Motor neuron (in vitro differentiated cells): ENCODE measurements at regions of chr6 and their contacts with region 1.

Region 1: DNA sequence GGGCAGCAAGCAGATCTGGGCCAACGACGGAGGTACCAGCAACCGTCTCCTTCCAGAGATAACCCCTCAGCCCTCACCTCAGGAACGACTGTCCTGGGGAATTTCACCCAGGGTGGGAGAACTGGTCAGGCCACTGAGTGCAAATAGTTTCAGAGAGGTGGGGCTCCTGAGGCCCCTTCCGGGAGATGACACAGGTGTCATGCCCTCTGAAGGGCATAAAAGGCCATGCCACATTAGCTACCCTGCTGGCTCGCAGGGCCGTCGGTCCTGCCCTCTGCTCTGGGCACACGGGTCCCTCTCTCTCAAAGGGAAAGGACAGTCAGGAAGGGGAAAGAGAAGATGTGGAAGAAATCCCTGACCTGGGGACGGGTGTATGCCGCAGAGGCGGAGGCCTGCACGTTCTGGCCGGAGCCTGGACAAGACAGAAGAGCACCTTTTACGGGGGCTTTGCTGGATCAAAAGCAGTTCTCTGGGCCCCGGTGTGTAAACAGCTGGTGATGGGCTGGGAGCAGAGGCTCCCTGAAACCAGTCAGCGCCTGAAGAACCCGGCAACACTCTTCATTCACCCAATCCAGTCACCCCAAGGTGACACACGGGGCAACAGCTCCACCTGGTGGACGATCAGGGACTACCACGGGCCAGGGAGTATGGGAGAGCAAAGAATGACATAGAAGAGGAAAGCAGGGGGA is 6.4 kb upstream of the TAF8 start:
- ATAC-seq: peak; percentile 55 to 98 (median 92)
- H3K4me3 ChIP-seq: peak overlapping the region in 1 of 5 donors; percentile 2
- H3K27ac ChIP-seq: peak overlapping the region in 1 of 2 donors; percentile 69
- H3K4me1 ChIP-seq: peaks cover 4 to 18% of the 10 kb centered on the region in 2 donors

Region 2: DNA sequence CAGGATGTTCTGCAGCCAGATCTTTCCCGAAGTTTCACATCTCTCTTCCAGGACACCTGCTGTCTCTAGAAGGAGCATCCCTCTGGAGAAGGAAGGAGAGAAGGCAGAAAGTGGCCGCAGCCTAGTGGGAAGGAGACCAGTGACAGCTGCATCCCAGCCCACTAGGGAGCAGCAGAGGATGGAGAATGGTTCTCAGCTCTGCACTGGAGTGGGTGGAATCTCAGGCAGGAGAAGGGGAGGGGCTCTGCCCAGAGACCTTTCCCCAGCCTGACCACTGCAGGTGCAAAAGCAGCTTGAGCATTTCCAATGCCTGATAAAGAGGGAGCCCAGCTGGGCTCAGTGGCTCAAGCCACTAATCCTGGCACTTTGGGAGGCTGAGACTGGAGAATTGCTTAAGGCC is 676.2 kb before region 1 on chr6:
- in situ Hi-C with region 1: loop called in 2 of 9 experiments (anchors 25 kb)
- ATAC-seq: peak; percentile 11 to 66 (median 23)
- H3K4me3 ChIP-seq: no peak overlapping the region
- H3K27ac ChIP-seq: no peak overlapping the region
- H3K4me1 ChIP-seq: peaks cover 16 to 19% of the 10 kb centered on the region in 2 donors

Region 3: GRCh38 chr6:41779793-41780545 is 264.0 kb before region 1 on chr6 and contains the start of gene FRS3:
- in situ Hi-C with region 1: loop called in 7 of 9 experiments (anchors 10 to 25 kb)
- ATAC-seq: peak; percentile 83 to 98 (median 96)
- H3K4me3 ChIP-seq: peak within 1 kb of the TSS; percentile 44 to 68 (median 65)
- H3K27ac ChIP-seq: peak within 1 kb of the TSS; percentile 5 to 32
- H3K4me1 ChIP-seq: peaks cover 6 to 10% of the 10 kb centered on the region in 2 donors
- total RNA-seq, gene FRS3: 0.51 to 11.8 (median 9.0) TPM

Region 4: GRCh38 chr6:41787219-41787917 is 256.6 kb before region 1 on chr6 and contains the start of gene TOMM6:
- in situ Hi-C with region 1: loop called in 6 of 9 experiments (anchors 10 to 25 kb)
- ATAC-seq: peak; percentile 77 to 85 (median 82)
- H3K4me3 ChIP-seq: peak within 1 kb of the TSS; percentile 59 to 97 (median 86)
- H3K27ac ChIP-seq: peak within 1 kb of the TSS; percentile 94 to 98
- H3K4me1 ChIP-seq: peaks cover 8 to 14% of the 10 kb centered on the region in 2 donors
- total RNA-seq, gene TOMM6: 180 to 286 (median 234) TPM

Region 5: GRCh38 chr6:41846666-41847237 is 197.2 kb before region 1 on chr6:
- in situ Hi-C with region 1: loop called in 2 of 9 experiments (anchors 25 kb)
- ATAC-seq: peak in 6 of 8 experiments; percentile 26 to 99 (median 90)
- H3K4me3 ChIP-seq: no peak overlapping the region
- H3K27ac ChIP-seq: no peak overlapping the region
- H3K4me1 ChIP-seq: no peaks in the 10 kb centered on the region

Region 6: DNA sequence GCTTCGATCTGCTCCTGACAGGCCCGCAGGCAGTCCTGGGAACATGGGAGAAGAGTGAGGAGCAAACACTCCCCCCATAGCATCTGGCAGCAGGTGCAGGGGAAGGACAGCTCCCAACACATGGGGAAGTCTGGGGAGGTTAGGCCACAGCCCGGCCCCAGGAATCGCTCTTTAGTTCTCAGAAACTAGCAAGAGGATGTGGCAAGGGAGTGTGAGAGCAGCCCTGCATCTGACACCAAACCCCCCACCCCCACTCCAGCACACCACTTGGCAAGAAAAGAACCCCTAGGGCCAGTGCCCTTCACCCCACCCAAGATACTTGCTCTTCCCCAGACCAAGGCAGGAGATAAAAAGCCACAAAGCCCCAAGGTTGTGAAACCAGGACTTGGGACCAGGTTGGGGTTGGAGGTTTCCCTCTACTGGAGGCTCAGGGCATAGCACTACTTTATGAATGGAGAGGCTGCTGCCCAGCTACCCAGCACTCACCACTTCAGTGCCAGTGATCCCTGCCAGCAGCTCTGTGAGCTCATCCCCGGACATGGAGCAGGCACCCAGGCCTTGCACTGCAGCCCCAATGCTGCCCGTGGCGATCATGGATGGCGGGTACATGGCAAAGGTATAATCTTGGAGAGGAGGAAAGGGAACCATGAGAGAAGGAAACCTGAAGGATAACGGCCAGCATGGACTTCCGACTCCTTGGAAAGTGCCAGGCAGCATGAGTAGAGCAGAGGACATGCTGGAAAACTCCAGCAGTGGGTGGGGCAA is 107.7 kb before region 1 on chr6:
- in situ Hi-C with region 1: loop called in 3 of 9 experiments (anchors 10 to 25 kb)
- ATAC-seq: peak; percentile 20 to 66 (median 40)
- H3K4me3 ChIP-seq: no peak overlapping the region
- H3K27ac ChIP-seq: no peak overlapping the region
- H3K4me1 ChIP-seq: peaks cover 13 to 21% of the 10 kb centered on the region in 2 donors

Region 7: GRCh38 chr6:41941280-41942066 is 102.5 kb before region 1 on chr6 and contains the start of gene CCND3:
- in situ Hi-C with region 1: loop called in 3 of 9 experiments (anchors 10 to 25 kb)
- ATAC-seq: peak; percentile 77 to 94 (median 92)
- H3K4me3 ChIP-seq: peak within 1 kb of the TSS; percentile 56 to 90 (median 63)
- H3K27ac ChIP-seq: peak within 1 kb of the TSS; percentile 14 to 64
- H3K4me1 ChIP-seq: peaks cover 17 to 26% of the 10 kb centered on the region in 2 donors
- total RNA-seq, gene CCND3: 10.3 to 32.6 (median 19.0) TPM